ENCODE measurements at regions of chr6 and their contacts with region 1.

Region 1: GRCh38 chr6:154805288-154805911 is 72.2 kb downstream of the SCAF8 start:
- DNase-seq: no peak
- H3K4me3 Mint-ChIP-seq: no peak overlapping the region
- H3K27ac Mint-ChIP-seq: no peak overlapping the region
- H3K4me1 Mint-ChIP-seq: peaks cover 1% of the 10 kb centered on the region
- H3K27me3 Mint-ChIP-seq: no peaks in the 10 kb centered on the region

Region 2: GRCh38 chr6:154675602-154676088 is 129.8 kb before region 1 on chr6:
- CTCF ChIA-PET with region 1: interaction called, 111 read pairs
- POLR2A ChIA-PET with region 1: interaction called, 4 read pairs
- DNase-seq: peak; percentile 89
- H3K4me3 Mint-ChIP-seq: no peak overlapping the region
- H3K27ac Mint-ChIP-seq: no peak overlapping the region
- H3K4me1 Mint-ChIP-seq: no peaks in the 10 kb centered on the region
- H3K27me3 Mint-ChIP-seq: no peaks in the 10 kb centered on the region

Region 3: DNA sequence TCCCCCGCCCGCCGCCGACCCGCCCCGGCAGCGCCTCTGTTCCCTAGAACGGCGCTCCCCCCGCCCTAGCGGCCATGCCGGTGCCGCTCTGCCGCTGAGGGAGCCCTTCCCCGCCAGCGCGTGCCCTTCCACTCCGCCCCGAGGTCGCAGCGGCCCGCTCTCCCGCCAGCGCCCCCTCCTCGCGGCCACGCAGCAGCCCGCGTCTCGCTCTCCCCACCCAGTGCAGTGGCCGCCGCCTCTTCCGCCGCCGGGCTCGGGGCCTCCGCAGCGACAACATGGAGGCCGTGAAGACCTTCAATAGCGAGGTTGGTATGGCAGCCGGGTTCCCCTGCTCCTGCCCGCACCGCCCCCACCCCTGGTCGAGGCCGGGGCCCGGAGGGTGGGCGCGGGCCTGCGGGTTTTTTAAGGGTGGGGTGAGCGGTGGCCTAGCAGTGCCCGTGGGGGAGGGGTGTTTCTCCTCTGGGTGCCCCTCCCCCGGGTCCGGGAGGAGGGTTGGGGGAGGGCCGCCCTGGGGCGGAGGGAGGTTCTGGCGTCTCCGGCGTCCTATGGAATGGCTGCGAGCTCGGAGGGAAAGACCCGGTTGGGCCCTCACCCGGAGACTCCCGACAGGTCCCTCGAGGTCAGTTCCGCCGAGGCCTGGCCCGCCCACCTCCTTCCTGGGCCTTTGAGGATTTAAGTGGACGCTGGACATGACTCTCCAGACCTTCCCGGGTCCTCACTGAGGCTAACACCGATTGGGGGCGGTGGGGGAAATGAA is 71.6 kb before region 1 on chr6:
- CTCF ChIA-PET with region 1: interaction called, 13 read pairs
- POLR2A ChIA-PET with region 1: interaction called, 3 read pairs
- DNase-seq: peak; percentile 92
- H3K4me3 Mint-ChIP-seq: peak overlapping the region; percentile 83
- H3K27ac Mint-ChIP-seq: peak overlapping the region; percentile 71
- H3K4me1 Mint-ChIP-seq: peaks cover 45% of the 10 kb centered on the region
- H3K27me3 Mint-ChIP-seq: no peaks in the 10 kb centered on the region

Region 4: DNA sequence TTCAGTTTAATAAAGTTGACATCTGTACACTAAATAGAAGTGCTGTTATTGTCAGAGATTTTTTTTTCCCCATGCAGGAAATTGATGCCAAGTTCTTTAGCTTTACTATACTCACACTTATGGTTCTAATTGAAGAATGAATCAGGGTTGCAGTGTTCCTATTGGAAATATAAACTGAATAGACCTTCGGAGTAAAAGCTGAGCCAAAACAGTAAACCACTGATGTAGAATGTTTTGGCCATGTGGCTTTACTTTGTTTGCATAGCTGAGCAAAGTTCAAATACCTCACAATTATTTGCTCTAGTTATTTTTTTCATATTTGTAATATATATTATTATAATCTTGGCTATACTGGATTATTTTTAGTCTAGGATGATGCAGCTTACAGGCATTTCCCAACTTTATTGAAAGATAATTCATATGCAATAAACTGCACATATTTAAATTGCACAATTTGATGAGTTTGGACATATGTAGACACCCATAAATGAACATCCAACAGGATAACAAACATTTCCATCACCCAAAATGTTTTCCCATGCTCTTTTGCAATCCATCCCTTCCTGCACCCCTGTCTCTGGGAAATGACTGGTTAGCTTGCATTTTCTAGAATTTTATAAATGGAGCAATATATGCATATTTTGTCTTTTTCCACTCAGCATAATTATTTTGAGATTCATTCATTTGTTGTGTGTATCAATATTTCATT is 756.0 kb after region 1 on chr6:
- CTCF ChIA-PET with region 1: no interaction called
- POLR2A ChIA-PET with region 1: no interaction called
- DNase-seq: no peak
- H3K4me3 Mint-ChIP-seq: no peak overlapping the region
- H3K27ac Mint-ChIP-seq: no peak overlapping the region
- H3K4me1 Mint-ChIP-seq: no peaks in the 10 kb centered on the region
- H3K27me3 Mint-ChIP-seq: no peaks in the 10 kb centered on the region

Measured in activated CD4-positive, alpha-beta memory T cell treated with anti-CD3 and anti-CD28 coated beads, Interleukin-2, amount 10 ng/mL, durations not matched to agents 7 days and 5 days (primary cell).